Panc1 (cell line): ENCODE measurements at regions of chr1 and their contacts with region 1.

Region 1: DNA sequence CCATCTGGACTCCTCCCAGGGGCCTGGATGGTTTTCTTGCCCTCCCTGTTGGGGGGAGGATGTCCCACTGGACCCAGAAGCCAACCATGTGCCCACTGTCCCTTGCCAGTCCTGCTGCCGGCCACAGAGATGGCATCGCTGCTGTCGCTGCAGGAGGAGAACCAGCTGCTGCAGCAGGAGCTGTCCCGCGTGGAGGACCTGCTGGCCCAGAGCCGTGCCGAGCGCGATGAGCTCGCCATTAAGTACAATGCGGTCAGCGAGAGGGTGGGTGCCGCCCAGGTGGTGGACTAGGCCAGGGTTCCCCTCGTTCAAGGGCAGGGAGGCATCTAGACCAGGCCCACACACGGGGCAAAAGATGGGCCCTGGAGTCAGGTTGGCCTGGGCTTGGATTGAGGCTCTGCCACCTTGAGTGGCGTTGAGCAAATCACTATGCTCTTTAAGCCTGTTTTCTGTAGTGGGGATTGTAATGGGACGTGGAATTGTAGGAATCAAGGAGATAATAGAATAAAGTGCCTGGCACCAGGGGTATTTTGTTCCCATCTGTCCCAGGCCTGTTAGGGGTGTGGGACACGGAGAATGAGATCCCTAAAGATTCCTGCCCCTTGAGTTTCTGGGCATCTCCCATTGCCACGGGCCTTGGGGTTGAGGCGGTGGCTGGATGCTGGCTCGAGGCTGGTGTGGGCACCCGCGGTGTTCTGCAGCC is 2.6 kb downstream of the CROCC start:
- DNase-seq: no peak
- ATAC-seq: no peak
- H3K4me3 ChIP-seq: no peak overlapping the region
- H3K27ac ChIP-seq: no peak overlapping the region
- H3K4me1 ChIP-seq: no peaks in the 10 kb centered on the region
- H3K27me3 ChIP-seq: no peaks in the 10 kb centered on the region
- CTCF ChIP-seq: no peak

Region 2: GRCh38 chr1:16960560-16961296 is 36.4 kb after region 1 on chr1:
- CTCF ChIA-PET with region 1: no interaction called
- POLR2A ChIA-PET with region 1: no interaction called
- in situ Hi-C with region 1: no loop called
- intact Hi-C with region 1: no loop called
- DNase-seq: peak; percentile 38
- ATAC-seq: peak; percentile 96
- H3K4me3 ChIP-seq: peak overlapping the region; percentile 43 to 57
- H3K27ac ChIP-seq: peak overlapping the region; percentile 64; the same call in 1 of the 2 replicates
- H3K4me1 ChIP-seq: peaks cover 5% of the 10 kb centered on the region
- H3K27me3 ChIP-seq: no peaks in the 10 kb centered on the region
- CTCF ChIP-seq: peak; percentile 95

Region 3: DNA sequence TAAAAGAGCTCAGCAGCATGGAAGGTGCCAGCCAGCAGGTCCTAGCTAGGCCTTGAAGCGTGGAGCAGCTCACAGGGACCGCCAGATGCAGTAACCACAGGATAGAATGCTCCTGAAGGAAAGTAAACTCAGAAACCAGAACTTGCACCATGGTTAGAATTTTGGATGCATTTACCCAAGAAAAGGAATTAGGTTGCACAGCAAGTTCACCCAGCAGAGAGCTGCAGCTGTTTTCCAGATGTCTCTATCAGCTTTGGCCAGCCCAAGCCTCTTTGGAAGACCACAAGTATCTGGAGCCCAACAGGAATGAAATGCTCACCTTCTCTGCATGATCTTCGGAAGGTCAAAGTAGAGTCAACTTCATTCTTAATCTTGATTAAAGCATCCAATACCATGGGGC is 108.4 kb after region 1 on chr1:
- CTCF ChIA-PET with region 1: interaction called, 10 read pairs
- POLR2A ChIA-PET with region 1: no interaction called
- in situ Hi-C with region 1: no loop called
- intact Hi-C with region 1: no loop called
- DNase-seq: no peak
- ATAC-seq: no peak
- H3K4me3 ChIP-seq: no peak overlapping the region
- H3K27ac ChIP-seq: no peak overlapping the region
- H3K4me1 ChIP-seq: no peaks in the 10 kb centered on the region
- H3K27me3 ChIP-seq: no peaks in the 10 kb centered on the region
- CTCF ChIP-seq: no peak